ACHN (cell line): ENCODE measurements at regions of chr4 and their contacts with region 1.

Region 1: GRCh38 chr4:17846266-17846665 is 35.5 kb downstream of the NCAPG start:
- DNase-seq: no peak

Region 2: DNA sequence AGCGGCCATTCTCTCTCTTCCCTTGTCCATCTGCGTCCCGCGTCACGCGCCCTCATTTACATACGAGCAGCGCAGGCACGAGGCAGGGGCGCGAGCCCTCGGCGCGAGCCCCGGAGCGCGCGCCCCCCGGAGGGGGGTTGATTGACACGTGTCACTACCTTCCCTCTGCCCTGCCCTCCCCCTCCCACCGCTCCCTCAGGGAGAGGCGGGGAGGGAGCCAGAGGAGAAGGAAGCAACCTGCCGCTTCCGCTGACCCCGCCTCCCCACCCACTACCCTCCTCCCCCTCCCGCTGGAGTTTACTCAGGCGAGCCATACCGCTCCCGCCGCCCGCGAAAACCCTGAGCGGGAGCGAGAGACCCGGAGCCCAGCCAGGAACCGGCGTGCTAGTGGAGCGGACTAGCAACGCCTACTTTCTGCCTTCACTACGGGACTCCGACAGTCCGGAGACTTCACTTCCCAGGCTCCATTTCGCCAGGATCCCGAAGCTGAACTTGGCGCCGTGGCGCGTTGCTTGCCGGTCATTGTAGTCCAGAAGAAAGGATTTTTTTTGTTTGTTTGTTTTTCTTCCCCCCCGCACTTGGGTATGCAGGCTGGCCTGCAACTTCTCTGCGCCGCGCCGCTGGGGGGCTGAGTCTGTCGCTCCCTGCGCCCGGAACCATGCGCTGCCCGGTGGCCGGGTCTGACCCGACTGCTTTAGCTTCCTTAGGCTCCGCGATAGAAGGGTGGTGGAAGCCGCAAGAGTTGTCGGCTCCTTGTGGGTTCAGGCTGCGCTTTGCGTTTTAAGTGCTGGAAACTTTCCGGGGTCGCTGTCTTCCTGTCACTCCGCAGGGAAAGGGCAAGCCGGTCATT is 175.7 kb after region 1 on chr4 and contains the start of gene LCORL:
- in situ Hi-C with region 1: loop called (anchors 25 kb)
- DNase-seq: peak; percentile 95